ENCODE measurements at regions of chr11 and their contacts with region 1.

Region 1: GRCh38 chr11:104830080-104830479 is 68.2 kb downstream of the CASP12 start:
- DNase-seq: no peak
- ATAC-seq: no peak
- H3K4me3 ChIP-seq: no peak overlapping the region
- H3K4me3 Mint-ChIP-seq: no peak overlapping the region
- H3K27ac ChIP-seq: no peak overlapping the region
- H3K27ac Mint-ChIP-seq: no peak overlapping the region
- H3K4me1 ChIP-seq: no peaks in the 10 kb centered on the region
- H3K4me1 Mint-ChIP-seq: no peaks in the 10 kb centered on the region
- H3K27me3 ChIP-seq: no peaks in the 10 kb centered on the region
- H3K27me3 Mint-ChIP-seq: no peaks in the 10 kb centered on the region

Region 2: DNA sequence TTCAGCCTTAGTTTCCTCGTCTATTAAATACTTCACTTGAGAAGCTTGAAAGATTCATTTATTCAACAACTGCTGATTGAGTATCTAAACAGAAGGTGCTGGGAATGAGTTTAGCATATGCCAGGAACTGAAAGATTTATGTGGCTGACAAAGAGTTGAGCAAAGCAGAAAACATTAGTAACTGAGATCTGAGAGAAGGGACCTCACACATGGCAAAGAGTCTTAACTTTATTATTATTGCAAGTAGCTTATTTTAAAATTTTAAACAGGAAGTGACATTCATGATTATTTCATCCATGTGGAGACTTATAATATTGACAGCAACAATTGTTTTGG is 65.4 kb before region 1 on chr11:
- CTCF ChIA-PET with region 1: no interaction called
- POLR2A ChIA-PET with region 1: no interaction called
- intact Hi-C with region 1: no loop called
- DNase-seq: no peak
- ATAC-seq: no peak
- H3K4me3 ChIP-seq: no peak overlapping the region
- H3K4me3 Mint-ChIP-seq: no peak overlapping the region
- H3K27ac ChIP-seq: no peak overlapping the region
- H3K27ac Mint-ChIP-seq: peak overlapping the region in 2 of 9 donors; percentile 30 to 46
- H3K4me1 ChIP-seq: peaks cover 0 to 3% of the 10 kb centered on the region in 2 donors
- H3K4me1 Mint-ChIP-seq: peaks cover 0 to 17% (median 6%) of the 10 kb centered on the region in 7 donors
- H3K27me3 ChIP-seq: no peaks in the 10 kb centered on the region
- H3K27me3 Mint-ChIP-seq: peaks cover 0 to 3% (median 0%) of the 10 kb centered on the region in 5 donors

Region 3: DNA sequence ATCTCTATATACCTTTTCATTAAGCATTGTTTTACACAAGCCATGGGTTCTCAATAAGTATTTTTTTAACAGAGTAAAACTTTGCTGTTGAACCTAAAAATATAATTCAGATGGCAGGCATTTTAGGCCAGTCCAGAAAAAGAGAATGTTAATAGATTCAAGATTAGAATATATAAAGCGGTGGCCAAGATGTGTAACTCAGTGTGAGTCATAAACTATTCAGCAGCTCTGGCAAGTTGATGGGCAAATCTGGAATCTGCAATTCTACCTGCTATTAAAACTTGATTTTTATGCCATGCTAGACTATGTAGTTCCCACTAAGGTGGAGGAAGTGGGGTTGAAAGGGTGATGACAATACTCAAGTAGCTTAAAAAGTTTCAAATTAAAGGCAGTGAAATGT is 22.7 kb after region 1 on chr11:
- CTCF ChIA-PET with region 1: no interaction called
- POLR2A ChIA-PET with region 1: no interaction called
- intact Hi-C with region 1: loop called in 1 of 2 experiments (anchors 2 kb)
- DNase-seq: no peak
- ATAC-seq: no peak
- H3K4me3 ChIP-seq: no peak overlapping the region
- H3K4me3 Mint-ChIP-seq: no peak overlapping the region
- H3K27ac ChIP-seq: no peak overlapping the region
- H3K27ac Mint-ChIP-seq: no peak overlapping the region
- H3K4me1 ChIP-seq: no peaks in the 10 kb centered on the region
- H3K4me1 Mint-ChIP-seq: peaks cover 0 to 2% (median under 1%) of the 10 kb centered on the region in 7 donors
- H3K27me3 ChIP-seq: no peaks in the 10 kb centered on the region
- H3K27me3 Mint-ChIP-seq: peaks cover 0 to 5% (median 0%) of the 10 kb centered on the region in 5 donors